GM12878 (cell line): ENCODE measurements at regions of chr7 and their contacts with region 1.

Region 1: GRCh38 chr7:70693686-70694360 is 438.1 kb upstream of the GALNT17 start:
- DNase-seq: no peak
- ATAC-seq: peak; percentile 79
- H3K4me3 ChIP-seq: peak overlapping the region; percentile 90
- H3K27ac ChIP-seq: peak overlapping the region; percentile 86; the same call in 1 of the 2 replicates
- H3K4me1 ChIP-seq: no peaks in the 10 kb centered on the region; the same call in 1 of the 2 replicates
- H3K27me3 ChIP-seq: no peaks in the 10 kb centered on the region
- CTCF ChIP-seq: peak in 1 of 3 experiments; percentile 16; a peak in 1 of 6 replicates
- EP300 ChIP-seq: no peak
- POLR2A ChIP-seq: peak; percentile 78
- RAD21 ChIP-seq: no peak

Region 2: DNA sequence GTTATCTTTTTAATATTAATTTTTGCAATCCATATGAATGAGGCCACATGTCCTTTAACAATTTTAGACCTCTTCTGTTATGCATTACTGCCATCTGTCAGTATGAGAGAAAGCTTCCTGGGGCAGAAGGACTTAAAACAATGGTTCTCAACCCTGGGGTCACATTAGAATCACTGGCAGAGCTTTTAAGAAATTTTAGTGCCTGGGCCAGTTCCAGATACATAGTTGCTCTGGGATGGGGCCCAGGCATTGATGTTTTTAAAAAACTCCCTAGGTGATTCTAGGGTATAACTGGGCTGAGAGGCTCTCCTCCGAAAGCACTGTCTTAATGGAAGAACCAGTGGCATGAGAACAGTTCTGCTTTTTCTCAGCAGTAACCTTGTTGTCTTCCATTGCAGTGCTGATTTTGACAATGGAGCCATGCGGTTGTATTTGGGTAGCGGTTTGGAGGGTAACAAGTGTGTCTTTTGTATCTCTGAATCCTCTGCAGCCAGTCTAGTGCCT is 868.7 kb before region 1 on chr7:
- CTCF ChIA-PET with region 1: interaction called, 6 read pairs
- POLR2A ChIA-PET with region 1: no interaction called
- RAD21 ChIA-PET with region 1: interaction called, 6 read pairs
- SMC1A ChIA-PET with region 1: interaction called, 10 read pairs
- in situ Hi-C with region 1: no loop called
- intact Hi-C with region 1: loop called (anchors 10 kb)
- DNase-seq: no peak
- ATAC-seq: peak; percentile 56
- H3K4me3 ChIP-seq: peak overlapping the region; percentile 68; the same call in 1 of the 2 replicates
- H3K27ac ChIP-seq: peak overlapping the region; percentile 89
- H3K4me1 ChIP-seq: peaks cover 38% of the 10 kb centered on the region
- H3K27me3 ChIP-seq: no peaks in the 10 kb centered on the region
- CTCF ChIP-seq: peak in 1 of 3 experiments; percentile 56; a peak in 2 of 6 replicates
- EP300 ChIP-seq: no peak
- POLR2A ChIP-seq: no peak
- RAD21 ChIP-seq: peak; percentile 69

Region 3: GRCh38 chr7:70052691-70053090 is 641.1 kb before region 1 on chr7:
- CTCF ChIA-PET with region 1: interaction called, 3 read pairs
- POLR2A ChIA-PET with region 1: interaction called, 3 read pairs
- RAD21 ChIA-PET with region 1: interaction called, 10 read pairs
- SMC1A ChIA-PET with region 1: interaction called, 3 read pairs
- in situ Hi-C with region 1: no loop called
- intact Hi-C with region 1: no loop called
- DNase-seq: no peak
- ATAC-seq: no peak
- H3K4me3 ChIP-seq: no peak overlapping the region
- H3K27ac ChIP-seq: no peak overlapping the region
- H3K4me1 ChIP-seq: no peaks in the 10 kb centered on the region
- H3K27me3 ChIP-seq: no peaks in the 10 kb centered on the region
- CTCF ChIP-seq: no peak
- EP300 ChIP-seq: no peak
- POLR2A ChIP-seq: no peak
- RAD21 ChIP-seq: no peak

Region 4: GRCh38 chr7:70237831-70238575 is 455.8 kb before region 1 on chr7:
- CTCF ChIA-PET with region 1: interaction called, 4 read pairs
- POLR2A ChIA-PET with region 1: no interaction called
- RAD21 ChIA-PET with region 1: no interaction called
- SMC1A ChIA-PET with region 1: interaction called, 7 read pairs
- in situ Hi-C with region 1: no loop called
- intact Hi-C with region 1: loop called (anchors 2 kb)
- DNase-seq: peak; percentile 93
- ATAC-seq: peak; percentile 100
- H3K4me3 ChIP-seq: peak overlapping the region; percentile 7; the same call in 1 of the 2 replicates
- H3K27ac ChIP-seq: peak overlapping the region; percentile 80
- H3K4me1 ChIP-seq: peaks cover 7% of the 10 kb centered on the region
- H3K27me3 ChIP-seq: no peaks in the 10 kb centered on the region
- CTCF ChIP-seq: peak in 1 of 3 experiments; percentile 6; a peak in 1 of 6 replicates
- EP300 ChIP-seq: peak; percentile 40 to 65; a peak in 2 of 4 replicates
- POLR2A ChIP-seq: peak; percentile 63; the same call in 1 of the 2 replicates
- RAD21 ChIP-seq: no peak

Region 5: DNA sequence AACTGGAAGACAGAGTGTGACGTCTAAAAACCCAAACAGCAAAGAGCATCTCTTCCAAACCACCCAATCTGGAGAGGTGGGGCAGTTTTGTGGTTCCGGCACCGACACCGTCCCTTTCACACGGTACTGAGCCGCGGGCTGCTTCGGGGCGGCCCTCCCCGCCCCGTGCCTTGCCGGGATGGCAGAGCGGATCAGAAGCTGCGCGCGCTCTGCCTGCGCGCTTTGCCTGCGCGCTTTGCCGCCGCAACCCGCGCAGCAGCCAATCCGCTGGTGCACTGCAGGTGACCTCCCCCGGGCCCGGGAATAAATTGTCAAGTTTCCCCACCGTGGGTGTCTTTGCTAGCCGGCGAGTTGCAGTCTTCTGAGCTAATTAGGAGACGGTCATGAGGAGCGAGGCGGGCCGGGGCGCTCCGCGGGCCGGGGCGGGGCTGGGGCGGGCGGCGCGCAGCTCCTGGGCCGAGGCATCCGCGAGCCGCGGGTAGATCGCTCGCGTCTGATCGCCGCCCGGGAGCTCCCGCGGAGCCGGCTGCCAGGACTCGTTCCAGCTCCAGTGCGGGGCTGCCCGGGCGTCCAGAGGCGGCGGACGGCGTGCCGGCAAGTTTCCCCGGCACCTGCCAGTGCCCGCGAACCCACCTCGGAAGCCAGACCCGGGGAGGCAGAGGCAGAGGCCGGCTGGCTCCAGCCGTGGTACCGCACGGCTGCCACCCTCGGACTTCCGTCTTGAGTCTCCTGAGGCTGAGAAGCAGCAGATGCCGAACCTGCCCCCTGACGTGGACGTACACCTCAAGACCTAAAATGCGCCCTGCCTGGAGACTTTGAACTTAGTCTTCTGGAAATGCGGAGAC is 97.8 kb before region 1 on chr7:
- CTCF ChIA-PET with region 1: interaction called, 5 read pairs
- POLR2A ChIA-PET with region 1: no interaction called
- RAD21 ChIA-PET with region 1: interaction called, 3 read pairs
- SMC1A ChIA-PET with region 1: no interaction called
- in situ Hi-C with region 1: no loop called
- intact Hi-C with region 1: loop called (anchors 5 kb)
- DNase-seq: no peak
- ATAC-seq: peak; percentile 88
- H3K4me3 ChIP-seq: peak overlapping the region; percentile 50; the same call in 1 of the 2 replicates
- H3K27ac ChIP-seq: no peak overlapping the region
- H3K4me1 ChIP-seq: peaks cover 6% of the 10 kb centered on the region
- H3K27me3 ChIP-seq: no peaks in the 10 kb centered on the region
- CTCF ChIP-seq: no peak
- EP300 ChIP-seq: no peak
- POLR2A ChIP-seq: no peak
- RAD21 ChIP-seq: no peak

Region 6: DNA sequence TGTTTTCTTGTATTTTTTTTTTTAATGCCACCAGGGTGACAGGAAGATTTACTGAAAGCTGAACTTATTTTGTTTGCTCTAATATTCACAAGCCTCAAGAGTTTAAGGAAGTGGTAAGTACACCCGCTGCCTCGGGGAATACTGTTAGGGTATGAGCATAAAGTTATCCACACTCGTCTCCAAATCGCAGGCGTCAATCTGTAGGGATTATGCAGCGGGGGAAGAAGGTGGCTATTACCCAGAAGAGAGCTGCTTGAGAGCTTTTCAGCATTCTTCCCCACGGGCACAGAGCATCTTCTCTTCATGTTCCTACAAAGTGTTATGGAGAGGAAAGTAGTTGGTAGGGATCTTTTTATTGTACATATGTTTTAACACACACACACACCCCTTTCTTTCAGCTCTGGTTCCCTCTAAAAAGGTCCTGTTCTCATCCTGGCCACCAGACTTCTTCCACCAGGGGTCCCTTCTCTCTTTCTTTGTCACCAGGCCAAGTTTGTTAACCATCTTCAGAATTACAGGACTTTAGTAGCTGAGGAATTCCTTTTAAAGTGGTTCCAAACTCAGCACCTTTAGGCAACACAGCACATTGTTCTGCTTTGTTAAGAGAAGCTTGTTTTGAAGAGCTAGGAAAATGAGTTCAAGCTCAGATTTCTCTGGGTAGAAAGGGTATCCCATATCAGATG is 26.5 kb after region 1 on chr7:
- CTCF ChIA-PET with region 1: interaction called, 54 read pairs
- POLR2A ChIA-PET with region 1: interaction called, 4 read pairs
- RAD21 ChIA-PET with region 1: interaction called, 108 read pairs
- SMC1A ChIA-PET with region 1: interaction called, 39 read pairs
- in situ Hi-C with region 1: no loop called
- intact Hi-C with region 1: no loop called
- DNase-seq: no peak
- ATAC-seq: peak; percentile 13; the same call in 1 of the 3 replicates
- H3K4me3 ChIP-seq: no peak overlapping the region
- H3K27ac ChIP-seq: peak overlapping the region; percentile 72
- H3K4me1 ChIP-seq: peaks cover 33% of the 10 kb centered on the region
- H3K27me3 ChIP-seq: no peaks in the 10 kb centered on the region
- CTCF ChIP-seq: peak; percentile 12 to 23 (median 16); a peak in 2 of 6 replicates
- EP300 ChIP-seq: no peak
- POLR2A ChIP-seq: no peak
- RAD21 ChIP-seq: peak; percentile 56

Region 7: GRCh38 chr7:70775570-70776156 is 81.8 kb after region 1 on chr7:
- CTCF ChIA-PET with region 1: interaction called, 83 read pairs
- POLR2A ChIA-PET with region 1: interaction called, 4 read pairs
- RAD21 ChIA-PET with region 1: interaction called, 55 read pairs
- SMC1A ChIA-PET with region 1: interaction called, 177 read pairs
- in situ Hi-C with region 1: no loop called
- intact Hi-C with region 1: loop called (anchors 5 kb)
- DNase-seq: peak; percentile 40
- ATAC-seq: peak; percentile 79
- H3K4me3 ChIP-seq: no peak overlapping the region
- H3K27ac ChIP-seq: peak overlapping the region; percentile 21
- H3K4me1 ChIP-seq: peaks cover 14% of the 10 kb centered on the region
- H3K27me3 ChIP-seq: no peaks in the 10 kb centered on the region
- CTCF ChIP-seq: peak; percentile 48 to 66 (median 57); a peak in 5 of 6 replicates
- EP300 ChIP-seq: no peak
- POLR2A ChIP-seq: no peak
- RAD21 ChIP-seq: peak; percentile 71